Activated naive CD4-positive, alpha-beta T cell treated with anti-CD3 and anti-CD28 coated beads, Interleukin-2, amount 10 ng/mL, durations not matched to agents 7 days and 5 days (primary cell): ENCODE measurements at regions of chr3 and their contacts with region 1.

Region 1: DNA sequence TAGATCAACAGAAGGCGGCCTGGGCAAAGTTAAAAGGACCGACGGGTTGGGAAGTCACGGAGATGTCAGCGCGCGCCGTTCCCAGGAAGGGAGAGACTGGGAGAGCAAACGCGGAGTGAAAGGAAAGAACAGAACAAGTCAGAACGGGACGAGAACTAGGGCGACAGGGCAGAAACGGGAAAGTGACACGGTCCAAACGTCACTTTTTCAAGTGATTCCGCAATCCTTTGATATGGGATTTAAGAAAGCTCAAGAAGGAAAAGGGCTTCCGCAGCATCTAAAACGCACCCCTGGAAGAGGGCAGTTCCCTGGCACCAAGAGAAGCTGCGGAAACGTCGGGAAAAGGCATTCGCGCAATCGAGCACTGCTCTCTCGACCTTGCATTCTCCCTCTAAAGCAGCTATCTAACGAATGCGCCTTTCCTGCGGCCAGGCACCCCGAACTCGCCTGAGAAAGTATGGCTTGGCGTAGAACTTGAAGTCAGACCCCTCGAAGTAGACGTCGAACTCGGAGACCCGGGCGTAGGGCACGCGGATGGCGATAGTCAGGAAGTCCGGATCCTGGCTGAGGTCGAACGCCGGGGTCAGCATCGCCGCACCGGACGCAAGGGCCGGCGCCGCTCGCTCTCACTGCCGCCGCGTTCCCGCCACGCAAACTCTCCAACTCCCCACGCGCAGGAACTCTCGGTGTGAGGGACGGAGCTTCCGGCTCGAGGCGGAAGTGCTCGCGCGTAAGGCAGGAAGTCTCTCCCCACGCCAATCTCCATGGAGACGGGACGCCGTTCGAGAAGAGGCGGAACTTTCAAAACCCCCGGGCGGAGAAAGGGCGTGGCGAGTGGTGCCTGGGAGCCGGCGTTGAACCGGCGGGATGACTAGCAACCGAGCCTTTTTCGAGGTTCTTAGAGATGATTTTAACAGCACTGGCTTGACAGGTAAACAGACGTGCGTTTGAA is at the start of gene SHQ1:
- DNase-seq: peak; percentile 97
- H3K4me3 Mint-ChIP-seq: peak within 1 kb of the TSS; percentile 88
- H3K27ac Mint-ChIP-seq: peak within 1 kb of the TSS; percentile 39
- H3K4me1 Mint-ChIP-seq: peaks cover 52% of the 10 kb centered on the region
- H3K27me3 Mint-ChIP-seq: peaks cover 5% of the 10 kb centered on the region

Region 2: DNA sequence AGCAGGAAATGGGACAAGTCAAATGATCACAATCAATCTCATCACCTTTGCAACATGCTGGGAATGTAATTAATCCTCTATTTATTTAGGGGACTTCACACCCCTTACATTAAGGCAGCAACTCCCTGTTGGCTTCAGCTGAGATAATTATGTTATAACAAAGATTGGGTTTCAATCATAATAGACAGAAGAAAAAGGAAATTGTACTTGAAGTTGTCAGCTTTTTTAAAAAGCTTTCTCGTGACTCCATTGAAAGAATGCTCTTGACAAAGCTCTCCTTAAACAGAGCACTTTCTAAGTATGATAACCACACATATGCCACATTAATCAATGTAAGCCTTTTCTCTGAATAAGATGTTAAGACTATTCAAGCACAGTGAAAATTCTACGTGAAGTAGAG is 65.5 kb before region 1 on chr3:
- CTCF ChIA-PET with region 1: no interaction called
- DNase-seq: no peak
- H3K4me3 Mint-ChIP-seq: no peak overlapping the region
- H3K27ac Mint-ChIP-seq: no peak overlapping the region
- H3K4me1 Mint-ChIP-seq: peaks cover 2% of the 10 kb centered on the region
- H3K27me3 Mint-ChIP-seq: no peaks in the 10 kb centered on the region

Region 3: GRCh38 chr3:72862314-72863090 is 14.5 kb after region 1 on chr3:
- CTCF ChIA-PET with region 1: interaction called, 10 read pairs
- DNase-seq: no peak
- H3K4me3 Mint-ChIP-seq: no peak overlapping the region
- H3K27ac Mint-ChIP-seq: no peak overlapping the region
- H3K4me1 Mint-ChIP-seq: peaks cover 4% of the 10 kb centered on the region
- H3K27me3 Mint-ChIP-seq: peaks cover under 1% of the 10 kb centered on the region

Region 4: DNA sequence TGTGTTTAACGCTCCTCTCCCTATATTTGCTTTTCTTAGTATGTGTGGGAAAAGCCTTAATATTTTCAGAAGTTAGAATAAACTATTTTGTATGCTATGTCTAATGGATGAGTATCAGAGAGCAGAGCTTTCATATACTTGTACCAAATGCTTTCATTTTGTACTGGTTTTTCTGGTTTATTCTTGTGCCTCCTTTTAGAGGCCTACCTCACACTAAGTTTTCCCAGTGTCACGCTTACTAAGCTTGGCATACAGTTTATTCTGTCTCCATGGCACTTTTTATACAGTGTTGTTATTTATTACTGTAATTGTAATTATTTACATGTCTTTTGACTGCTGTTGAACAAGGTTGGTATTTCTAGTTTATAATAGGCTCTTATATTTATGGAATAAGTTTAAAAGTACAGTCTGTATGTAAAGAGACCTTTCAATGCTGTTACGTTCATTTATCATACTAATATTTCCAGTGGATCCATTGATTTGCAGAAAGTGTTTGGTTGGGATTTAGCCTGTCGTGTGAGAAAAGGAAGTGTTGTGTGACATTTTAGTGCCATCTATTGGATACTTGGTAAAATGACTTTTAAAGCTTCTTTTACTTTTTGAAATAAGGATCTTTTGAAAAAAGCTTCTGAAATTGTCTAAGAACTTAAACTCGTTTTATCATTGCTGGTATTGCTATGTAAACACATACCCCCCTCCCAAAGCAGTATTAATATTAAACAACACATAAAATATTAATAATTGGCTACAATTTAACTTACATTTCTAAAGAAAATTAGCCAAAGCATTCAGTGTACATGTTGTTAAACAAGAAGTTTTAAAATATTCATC is 208.2 kb after region 1 on chr3:
- CTCF ChIA-PET with region 1: interaction called, 35 read pairs
- DNase-seq: no peak
- H3K4me3 Mint-ChIP-seq: no peak overlapping the region
- H3K27ac Mint-ChIP-seq: no peak overlapping the region
- H3K4me1 Mint-ChIP-seq: peaks cover 3% of the 10 kb centered on the region
- H3K27me3 Mint-ChIP-seq: no peaks in the 10 kb centered on the region

Region 5: DNA sequence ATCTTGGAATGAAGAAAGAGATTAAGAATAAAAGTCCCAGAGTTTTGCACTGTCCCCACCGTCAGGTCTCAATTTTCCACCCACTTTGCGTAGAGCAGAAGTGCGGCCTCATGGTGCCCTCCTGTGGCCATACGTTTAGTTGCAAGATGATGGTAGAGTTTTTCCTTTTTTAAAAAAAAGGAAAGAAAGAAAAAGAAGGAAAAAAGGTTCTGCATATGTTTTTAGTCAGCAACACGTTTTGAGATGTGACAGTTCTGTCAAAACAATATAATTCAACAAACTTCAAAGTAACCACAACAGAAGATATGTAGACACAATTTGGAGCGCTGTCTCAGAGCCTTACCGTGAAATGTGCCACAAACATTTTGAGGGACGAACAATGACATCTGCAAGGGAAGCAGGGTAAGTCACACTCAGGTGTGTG is 238.1 kb after region 1 on chr3:
- CTCF ChIA-PET with region 1: interaction called, 51 read pairs
- DNase-seq: peak; percentile 55
- H3K4me3 Mint-ChIP-seq: no peak overlapping the region
- H3K27ac Mint-ChIP-seq: no peak overlapping the region
- H3K4me1 Mint-ChIP-seq: peaks cover 7% of the 10 kb centered on the region
- H3K27me3 Mint-ChIP-seq: peaks cover 4% of the 10 kb centered on the region